ENCODE measurements at regions of chr14 and their contacts with region 1.

Region 1: DNA sequence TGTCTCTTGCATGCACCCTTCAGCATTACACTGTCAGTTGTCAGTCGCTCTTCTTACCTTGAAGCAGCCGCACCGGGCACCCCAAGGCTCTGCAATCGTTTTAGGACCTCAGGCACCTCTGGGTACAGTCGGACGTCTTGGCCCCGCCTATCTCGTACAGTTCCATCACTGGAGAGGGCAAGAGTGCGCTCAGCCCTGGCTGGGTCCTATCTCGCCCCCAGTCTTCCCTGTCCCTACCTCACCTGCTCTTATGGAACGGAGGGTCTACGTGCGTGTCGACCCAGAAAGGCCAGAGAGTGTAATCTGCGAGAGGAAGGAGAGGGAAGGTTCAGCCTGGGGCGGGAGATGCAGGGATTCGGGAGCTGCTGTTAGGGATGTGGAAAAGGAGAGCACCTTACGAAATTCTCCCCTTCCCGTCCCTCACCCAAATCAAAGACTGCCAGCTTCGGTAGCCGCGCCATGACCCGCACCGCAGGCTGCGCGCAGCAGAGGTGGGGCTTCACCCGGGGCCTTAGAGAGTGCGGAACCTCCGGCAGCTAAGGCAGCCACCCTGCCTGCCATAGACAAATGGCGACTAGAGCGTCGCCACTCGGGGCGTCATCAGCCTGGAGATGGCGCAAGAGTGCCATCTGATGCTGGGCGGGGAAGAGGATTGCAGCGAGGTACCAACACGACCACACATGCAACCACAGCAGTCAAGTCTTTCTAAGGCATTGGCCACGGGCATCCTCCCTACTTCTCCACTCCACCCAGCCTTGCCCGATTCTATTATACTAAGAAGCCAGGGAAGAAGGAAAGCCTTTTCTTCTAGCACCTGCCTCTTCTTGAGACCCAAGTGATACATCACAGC is at the start of gene MDP1:
- DNase-seq: peak; percentile 90 to 95
- ATAC-seq: peak; percentile 77 to 84
- H3K4me3 ChIP-seq: peak within 1 kb of the TSS; percentile 63
- H3K27ac ChIP-seq: peak within 1 kb of the TSS; percentile 80 to 92
- H3K4me1 ChIP-seq: peaks cover 24% of the 10 kb centered on the region
- CTCF ChIP-seq: peak; percentile 56
- EP300 ChIP-seq: no peak
- POLR2A ChIP-seq: peak; percentile 86
- RAD21 ChIP-seq: peak; percentile 46 to 56; a peak in 4 of 5 replicates
- polyA plus RNA-seq, gene MDP1: 31.8 and 38.6 TPM in 2 replicates

Region 2: GRCh38 chr14:24188251-24189058 is 27.3 kb before region 1 on chr14 and contains the start of gene IPO4:
- CTCF ChIA-PET with region 1: interaction called, 5 read pairs
- POLR2A ChIA-PET with region 1: interaction called, 16 read pairs
- DNase-seq: peak; percentile 98 to 99
- ATAC-seq: peak; percentile 88 to 94
- H3K4me3 ChIP-seq: peak within 1 kb of the TSS; percentile 97
- H3K27ac ChIP-seq: peak within 1 kb of the TSS; percentile 96 to 98
- H3K4me1 ChIP-seq: peaks cover 16% of the 10 kb centered on the region
- CTCF ChIP-seq: no peak
- EP300 ChIP-seq: no peak
- POLR2A ChIP-seq: peak; percentile 81
- RAD21 ChIP-seq: no peak
- polyA plus RNA-seq, gene IPO4: 37.1 and 45.3 TPM in 2 replicates

Region 3: GRCh38 chr14:24195191-24196070 is 20.3 kb before region 1 on chr14 and contains the start of gene TM9SF1:
- CTCF ChIA-PET with region 1: interaction called, 4 read pairs
- POLR2A ChIA-PET with region 1: interaction called, 36 read pairs
- DNase-seq: peak; percentile 79 to 90
- ATAC-seq: peak; percentile 96
- H3K4me3 ChIP-seq: peak within 1 kb of the TSS; percentile 62
- H3K27ac ChIP-seq: peak within 1 kb of the TSS; percentile 88 to 98
- H3K4me1 ChIP-seq: peaks cover 14% of the 10 kb centered on the region; the same call in 2 of the 3 replicates
- CTCF ChIP-seq: no peak
- EP300 ChIP-seq: no peak
- POLR2A ChIP-seq: peak; percentile 78
- RAD21 ChIP-seq: no peak
- polyA plus RNA-seq, gene TM9SF1: 48.0 and 74.9 TPM in 2 replicates

Region 4: GRCh38 chr14:24232121-24232644 is 16.5 kb after region 1 on chr14 and contains the start of gene NEDD8:
- CTCF ChIA-PET with region 1: interaction called, 11 read pairs
- POLR2A ChIA-PET with region 1: interaction called, 3 read pairs
- DNase-seq: peak; percentile 89 to 92
- ATAC-seq: peak; percentile 91 to 92
- H3K4me3 ChIP-seq: peak within 1 kb of the TSS; percentile 73
- H3K27ac ChIP-seq: peak within 1 kb of the TSS; percentile 85 to 96
- H3K4me1 ChIP-seq: peaks cover 18% of the 10 kb centered on the region
- CTCF ChIP-seq: no peak
- EP300 ChIP-seq: no peak
- POLR2A ChIP-seq: peak; percentile 73
- RAD21 ChIP-seq: no peak
- polyA plus RNA-seq, gene NEDD8: 381 and 433 TPM in 2 replicates

Region 5: DNA sequence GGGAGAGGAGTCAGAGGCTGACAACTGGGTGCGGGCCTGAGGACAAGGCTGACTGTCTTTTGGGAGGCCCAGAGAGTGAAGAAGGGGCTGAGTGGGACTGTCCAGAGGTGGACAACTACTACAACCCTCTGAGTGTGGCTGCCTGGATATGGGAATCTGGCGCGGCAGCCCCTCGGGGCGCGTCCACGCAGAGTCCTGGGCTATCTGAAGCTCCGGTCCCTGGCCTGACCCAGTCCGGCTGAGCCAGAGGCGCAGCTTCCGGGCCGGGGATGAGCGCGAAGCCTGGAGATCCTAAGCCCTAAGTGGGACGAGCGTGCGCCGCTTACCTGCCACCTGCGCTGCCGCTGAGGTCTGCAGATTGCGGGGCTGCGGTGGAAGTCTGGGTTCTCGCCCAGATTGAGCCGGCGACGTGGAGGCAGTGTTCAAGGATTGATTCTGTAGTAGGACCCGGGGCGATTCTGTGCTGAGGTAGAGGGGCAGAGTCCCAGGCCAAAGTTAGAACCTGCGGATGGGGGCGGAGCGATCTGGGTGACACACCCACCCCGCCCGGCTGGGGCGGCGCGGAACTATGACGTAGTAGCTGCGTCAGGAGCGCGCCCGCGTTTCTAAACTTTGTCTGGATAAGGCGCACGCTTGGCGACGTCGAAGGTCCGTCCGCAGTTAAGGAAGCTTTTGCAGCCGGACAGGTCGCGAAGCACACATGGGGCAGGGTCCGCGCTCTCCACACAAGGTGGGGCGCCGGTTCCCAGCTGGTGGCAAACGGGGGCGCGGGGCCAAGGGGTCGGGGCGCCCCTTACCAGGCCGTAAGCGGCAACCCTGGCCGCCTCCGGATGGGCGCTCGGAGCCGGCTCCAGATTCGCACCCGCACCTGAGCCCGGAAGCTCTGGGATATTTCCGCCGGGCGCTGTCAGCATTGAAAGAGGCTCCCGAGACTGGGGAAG is 83.8 kb after region 1 on chr14 and contains the starts of genes DHRS1 and NOP9:
- CTCF ChIA-PET with region 1: interaction called, 31 read pairs
- POLR2A ChIA-PET with region 1: interaction called, 5 read pairs
- DNase-seq: peak; percentile 87 to 91
- ATAC-seq: peak; percentile 62 to 82
- H3K4me3 ChIP-seq: peak within 1 kb of the TSS; percentile 81
- H3K27ac ChIP-seq: peak within 1 kb of the TSS; percentile 82 to 92
- H3K4me1 ChIP-seq: peaks cover 15% of the 10 kb centered on the region; the same call in 2 of the 3 replicates
- CTCF ChIP-seq: no peak
- EP300 ChIP-seq: no peak
- POLR2A ChIP-seq: peak; percentile 61
- RAD21 ChIP-seq: no peak
- polyA plus RNA-seq, gene DHRS1: 17.4 and 17.9 TPM in 2 replicates
- polyA plus RNA-seq, gene NOP9: 16.5 and 23.6 TPM in 2 replicates